Activated B cell treated with CpG ODN at 0.5 μM for 24 hours (primary cell): ENCODE measurements at regions of chr9 and their contacts with region 1.

Region 1: DNA sequence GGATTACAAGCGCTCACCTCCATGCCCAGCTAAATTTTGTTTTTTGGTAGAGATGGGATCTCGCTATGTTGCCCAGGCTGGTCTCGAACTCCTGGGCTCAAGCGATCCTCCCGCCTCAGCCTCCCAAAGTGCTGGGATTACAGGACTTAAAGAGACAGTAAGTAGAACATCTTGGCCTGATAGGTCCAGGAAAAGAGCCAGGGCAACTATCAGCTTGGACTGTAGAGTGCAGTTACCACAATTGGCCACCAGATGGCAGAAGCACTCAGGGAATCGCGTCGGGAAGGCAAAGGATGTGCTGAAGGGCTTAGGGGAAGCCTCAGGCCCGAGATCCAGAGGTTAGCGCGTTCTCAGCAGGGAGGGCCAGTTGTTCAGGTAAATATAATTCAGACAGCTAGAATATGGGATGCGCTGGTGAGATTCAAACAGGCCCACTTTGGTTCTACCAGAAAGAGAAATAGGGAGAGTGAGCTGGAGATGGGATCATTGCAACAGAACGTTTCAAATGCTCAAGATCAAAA is 21.5 kb downstream of the C9orf57 start:
- DNase-seq: peak; percentile 39
- ATAC-seq: peak; percentile 81
- H3K4me3 Mint-ChIP-seq: no peak overlapping the region
- H3K27ac Mint-ChIP-seq: no peak overlapping the region
- H3K4me1 Mint-ChIP-seq: peaks cover 5% of the 10 kb centered on the region
- H3K27me3 Mint-ChIP-seq: peaks cover 3% of the 10 kb centered on the region
- CTCF ChIP-seq: peak; percentile 64

Region 2: GRCh38 chr9:72203205-72203803 is 164.4 kb after region 1 on chr9:
- CTCF ChIA-PET with region 1: interaction called, 4 read pairs
- POLR2A ChIA-PET with region 1: no interaction called
- intact Hi-C with region 1: loop called (anchors 2 kb)
- DNase-seq: no peak
- ATAC-seq: no peak
- H3K4me3 Mint-ChIP-seq: no peak overlapping the region
- H3K27ac Mint-ChIP-seq: no peak overlapping the region
- H3K4me1 Mint-ChIP-seq: peaks cover 2% of the 10 kb centered on the region
- H3K27me3 Mint-ChIP-seq: no peaks in the 10 kb centered on the region
- CTCF ChIP-seq: no peak

Region 3: GRCh38 chr9:72271613-72272478 is 232.9 kb after region 1 on chr9:
- CTCF ChIA-PET with region 1: interaction called, 103 read pairs
- POLR2A ChIA-PET with region 1: interaction called, 3 read pairs
- intact Hi-C with region 1: loop called (anchors 1 kb)
- DNase-seq: no peak
- ATAC-seq: peak; percentile 62
- H3K4me3 Mint-ChIP-seq: no peak overlapping the region
- H3K27ac Mint-ChIP-seq: no peak overlapping the region
- H3K4me1 Mint-ChIP-seq: no peaks in the 10 kb centered on the region
- H3K27me3 Mint-ChIP-seq: peaks cover 3% of the 10 kb centered on the region
- CTCF ChIP-seq: no peak

Region 4: GRCh38 chr9:72592502-72593403 is 553.8 kb after region 1 on chr9:
- CTCF ChIA-PET with region 1: no interaction called
- POLR2A ChIA-PET with region 1: no interaction called
- intact Hi-C with region 1: loop called (anchors 1 kb)
- DNase-seq: no peak
- ATAC-seq: peak; percentile 68
- H3K4me3 Mint-ChIP-seq: no peak overlapping the region
- H3K27ac Mint-ChIP-seq: no peak overlapping the region
- H3K4me1 Mint-ChIP-seq: peaks cover 4% of the 10 kb centered on the region
- H3K27me3 Mint-ChIP-seq: peaks cover 2% of the 10 kb centered on the region
- CTCF ChIP-seq: peak; percentile 41

Region 5: GRCh38 chr9:72827950-72828731 is 789.2 kb after region 1 on chr9:
- CTCF ChIA-PET with region 1: interaction called, 12 read pairs
- POLR2A ChIA-PET with region 1: no interaction called
- intact Hi-C with region 1: no loop called
- DNase-seq: no peak
- ATAC-seq: no peak
- H3K4me3 Mint-ChIP-seq: no peak overlapping the region
- H3K27ac Mint-ChIP-seq: no peak overlapping the region
- H3K4me1 Mint-ChIP-seq: no peaks in the 10 kb centered on the region
- H3K27me3 Mint-ChIP-seq: no peaks in the 10 kb centered on the region
- CTCF ChIP-seq: no peak

Region 6: DNA sequence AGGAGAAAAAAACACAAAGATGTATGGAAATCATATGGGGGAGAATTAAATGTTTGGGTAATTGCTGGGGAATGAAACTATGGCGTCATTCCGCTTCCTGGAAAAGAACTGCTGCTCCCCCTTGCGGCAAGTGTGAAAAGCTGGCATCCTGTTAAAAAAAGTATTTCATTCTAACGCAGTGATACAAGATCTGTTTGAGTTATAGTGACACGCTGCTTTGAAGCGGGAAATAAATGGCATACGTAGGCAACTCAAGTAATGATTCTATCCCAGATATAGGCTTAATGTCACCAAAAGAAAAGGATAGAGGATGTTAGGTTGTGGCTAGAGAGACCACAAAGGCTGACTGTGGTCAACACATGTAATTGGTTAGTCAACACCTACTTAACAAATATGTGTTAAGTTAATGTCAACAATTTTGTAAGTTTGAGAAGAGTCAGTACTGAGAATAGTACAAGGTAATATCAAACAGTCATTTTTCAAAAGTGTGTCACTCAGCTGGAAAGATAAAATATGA is 984.1 kb after region 1 on chr9:
- CTCF ChIA-PET with region 1: interaction called, 7 read pairs
- POLR2A ChIA-PET with region 1: no interaction called
- intact Hi-C with region 1: loop called (anchors 2 kb)
- DNase-seq: no peak
- ATAC-seq: no peak
- H3K4me3 Mint-ChIP-seq: no peak overlapping the region
- H3K27ac Mint-ChIP-seq: no peak overlapping the region
- H3K4me1 Mint-ChIP-seq: peaks cover 42% of the 10 kb centered on the region
- H3K27me3 Mint-ChIP-seq: peaks cover 3% of the 10 kb centered on the region
- CTCF ChIP-seq: peak; percentile 39

Region 7: GRCh38 chr9:73081979-73082657 is 1043.2 kb after region 1 on chr9:
- CTCF ChIA-PET with region 1: interaction called, 4 read pairs
- POLR2A ChIA-PET with region 1: no interaction called
- intact Hi-C with region 1: loop called (anchors 1 kb)
- DNase-seq: no peak
- ATAC-seq: no peak
- H3K4me3 Mint-ChIP-seq: no peak overlapping the region
- H3K27ac Mint-ChIP-seq: no peak overlapping the region
- H3K4me1 Mint-ChIP-seq: no peaks in the 10 kb centered on the region
- H3K27me3 Mint-ChIP-seq: no peaks in the 10 kb centered on the region
- CTCF ChIP-seq: no peak